Activated CD4-positive, alpha-beta T cell treated with anti-CD3 and anti-CD28 coated beads, Interleukin-2, amount 10 ng/mL, durations not matched to agents 24 days and 14 days (primary cell): ENCODE measurements at regions of chr2 and their contacts with region 1.

Region 1: GRCh38 chr2:61694312-61695274 is 156.4 kb upstream of the XPO1 start:
- DNase-seq: peak; percentile 95
- H3K4me3 Mint-ChIP-seq: peak overlapping the region; percentile 92
- H3K27ac Mint-ChIP-seq: peak overlapping the region; percentile 93
- H3K4me1 Mint-ChIP-seq: peaks cover 15% of the 10 kb centered on the region
- H3K27me3 Mint-ChIP-seq: peaks cover 2% of the 10 kb centered on the region

Region 2: DNA sequence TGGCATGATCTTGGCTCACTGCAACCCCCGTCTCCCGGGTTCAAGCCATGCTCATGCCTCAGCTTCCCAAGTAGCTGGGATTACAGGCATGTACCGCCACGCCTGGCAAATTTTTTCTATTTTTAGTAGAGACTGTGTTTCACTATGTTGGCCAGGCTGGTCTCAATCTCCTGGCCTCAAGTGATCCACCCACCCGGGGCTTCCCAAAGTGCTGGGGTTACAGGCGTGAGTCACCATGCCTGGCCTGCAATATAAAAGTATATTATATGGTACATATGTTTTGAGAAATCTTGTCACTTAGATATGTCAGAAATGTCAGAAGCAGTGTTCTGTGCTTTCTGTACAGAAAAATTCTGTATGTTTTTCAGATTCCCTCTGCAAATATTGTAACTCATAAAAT is 137.2 kb before region 1 on chr2:
- intact Hi-C with region 1: no loop called
- DNase-seq: no peak
- H3K4me3 Mint-ChIP-seq: no peak overlapping the region
- H3K27ac Mint-ChIP-seq: no peak overlapping the region
- H3K4me1 Mint-ChIP-seq: no peaks in the 10 kb centered on the region
- H3K27me3 Mint-ChIP-seq: peaks cover 6% of the 10 kb centered on the region

Region 3: GRCh38 chr2:61670591-61671501 is 23.7 kb before region 1 on chr2:
- intact Hi-C with region 1: loop called (anchors 2 kb)
- DNase-seq: peak; percentile 78
- H3K4me3 Mint-ChIP-seq: peak overlapping the region; percentile 48
- H3K27ac Mint-ChIP-seq: peak overlapping the region; percentile 79
- H3K4me1 Mint-ChIP-seq: peaks cover 17% of the 10 kb centered on the region
- H3K27me3 Mint-ChIP-seq: peaks cover 2% of the 10 kb centered on the region

Region 4: DNA sequence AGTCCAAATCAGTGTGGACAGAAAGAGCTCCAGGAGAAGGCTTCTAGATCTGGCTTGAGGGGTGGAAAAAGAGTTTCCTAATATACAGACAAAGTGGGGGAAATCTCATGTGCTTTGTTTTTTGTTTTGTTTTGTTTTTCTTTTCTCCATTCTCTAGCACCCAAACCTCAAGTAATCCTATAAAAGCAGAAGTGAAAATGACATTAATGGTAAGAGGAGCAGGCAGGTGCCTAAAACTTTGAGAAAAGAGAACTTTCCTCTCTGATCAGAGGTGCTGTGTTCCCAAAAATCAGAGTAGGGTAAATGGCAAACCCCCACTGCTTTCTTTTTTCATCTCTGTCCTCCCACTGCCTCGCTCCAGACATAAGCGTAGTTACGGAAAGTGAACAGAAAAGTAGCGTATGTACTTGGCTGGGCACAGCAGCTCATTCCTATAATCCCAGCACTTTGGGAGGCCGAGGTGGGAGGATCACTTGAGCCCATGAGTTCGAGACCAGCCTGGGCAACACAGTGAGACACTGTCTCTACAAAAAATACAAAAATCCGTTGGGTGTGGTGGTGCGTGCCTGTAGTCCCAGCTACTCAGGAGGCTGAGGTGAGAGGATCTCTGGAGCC is 81.5 kb after region 1 on chr2:
- intact Hi-C with region 1: no loop called
- DNase-seq: no peak
- H3K4me3 Mint-ChIP-seq: no peak overlapping the region
- H3K27ac Mint-ChIP-seq: no peak overlapping the region
- H3K4me1 Mint-ChIP-seq: no peaks in the 10 kb centered on the region
- H3K27me3 Mint-ChIP-seq: peaks cover 19% of the 10 kb centered on the region